ENCODE measurements at regions of chr11 and their contacts with region 1.

Region 1: DNA sequence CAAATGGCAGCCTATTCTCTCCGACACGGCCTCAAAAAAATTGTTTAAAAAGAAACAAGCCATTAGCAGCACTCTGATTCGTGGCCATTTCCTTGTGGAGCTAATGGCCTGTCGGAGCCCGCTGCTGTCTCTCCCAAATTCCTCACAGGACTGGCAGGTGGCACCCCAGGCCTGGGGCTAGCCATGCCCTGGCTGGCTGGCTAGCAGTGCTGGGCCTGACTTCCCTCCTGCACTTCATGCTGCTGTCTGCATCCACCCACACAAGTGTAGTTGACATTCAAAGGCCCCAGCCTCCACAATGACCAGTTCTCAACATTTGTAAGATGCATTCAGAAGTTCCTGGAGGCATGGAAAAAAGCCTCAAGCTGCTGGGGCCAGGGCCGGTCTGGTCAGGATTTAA is 61.5 kb downstream of the SMCO4 start:
- DNase-seq: peak; percentile 67 to 75 (median 67)
- ATAC-seq: peak; percentile 84 to 95 (median 92)
- H3K4me3 ChIP-seq: no peak overlapping the region
- H3K27ac ChIP-seq: no peak overlapping the region
- H3K4me1 ChIP-seq: peaks cover 0 to 37% (median 18%) of the 10 kb centered on the region in 4 donors
- H3K27me3 ChIP-seq: no peaks in the 10 kb centered on the region
- CTCF ChIP-seq: peak; percentile 32 to 56 (median 48)
- POLR2A ChIP-seq: no peak

Region 2: GRCh38 chr11:93543292-93543977 is 61.7 kb after region 1 on chr11 and contains the start of gene SMCO4:
- intact Hi-C with region 1: loop called in 1 of 2 experiments (anchors 5 kb)
- DNase-seq: peak; percentile 90 to 93 (median 92)
- ATAC-seq: peak; percentile 87 to 95 (median 93)
- H3K4me3 ChIP-seq: peak within 1 kb of the TSS; percentile 81 to 87 (median 86)
- H3K27ac ChIP-seq: peak within 1 kb of the TSS; percentile 81 to 93 (median 88)
- H3K4me1 ChIP-seq: peaks cover 0 to 30% (median under 1%) of the 10 kb centered on the region in 4 donors
- H3K27me3 ChIP-seq: no peaks in the 10 kb centered on the region
- CTCF ChIP-seq: peak; percentile 73 to 85 (median 76)
- POLR2A ChIP-seq: peak; percentile 73
- total RNA-seq, gene SMCO4: 43.5 to 106 (median 51.8) TPM

Region 3: DNA sequence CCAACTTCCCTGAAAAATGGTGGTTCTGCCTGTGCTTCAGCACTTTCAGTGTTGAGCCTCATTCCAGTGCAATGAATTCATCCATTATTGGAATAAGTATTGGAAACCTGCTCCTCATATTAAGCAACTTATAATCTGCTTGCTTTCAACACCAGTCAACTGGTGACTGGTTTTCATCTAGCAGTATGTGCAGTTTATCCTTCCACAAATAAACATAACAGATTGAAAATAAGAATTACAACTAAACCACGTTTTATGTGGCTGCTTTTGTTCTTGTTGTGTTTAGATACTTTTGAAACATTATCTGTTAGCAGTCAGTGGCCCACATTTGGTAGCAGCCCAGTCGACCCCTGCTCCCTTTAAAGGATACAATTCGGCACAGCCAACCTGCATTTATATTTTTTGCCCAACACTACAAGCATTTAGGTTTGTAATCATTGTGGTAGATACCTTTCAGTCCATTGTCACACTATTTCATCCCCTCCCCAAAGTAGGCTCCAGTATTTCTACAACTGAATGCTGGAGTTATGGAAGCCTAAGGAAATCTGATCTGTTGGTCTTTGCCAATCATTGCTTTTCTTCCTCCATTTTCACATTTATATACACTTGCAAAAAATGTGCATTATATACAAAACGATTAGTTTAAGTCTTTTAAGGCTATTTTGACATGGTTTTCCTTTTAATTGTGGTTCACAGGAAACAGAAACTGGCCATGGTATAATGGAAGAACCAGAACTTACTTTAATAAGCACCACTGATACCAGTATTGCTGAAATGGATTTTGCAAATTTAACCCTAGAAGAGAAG is 246.5 kb after region 1 on chr11:
- intact Hi-C with region 1: no loop called
- DNase-seq: no peak
- ATAC-seq: peak in 1 of 4 donors; percentile 22
- H3K4me3 ChIP-seq: no peak overlapping the region
- H3K27ac ChIP-seq: no peak overlapping the region
- H3K4me1 ChIP-seq: peaks cover 0 to 15% (median 0%) of the 10 kb centered on the region in 4 donors
- H3K27me3 ChIP-seq: no peaks in the 10 kb centered on the region
- CTCF ChIP-seq: no peak
- POLR2A ChIP-seq: no peak

Measured in right lobe of liver (tissue), 6 donors.